ENCODE measurements at regions of chr19 and their contacts with region 1.

Region 1: DNA sequence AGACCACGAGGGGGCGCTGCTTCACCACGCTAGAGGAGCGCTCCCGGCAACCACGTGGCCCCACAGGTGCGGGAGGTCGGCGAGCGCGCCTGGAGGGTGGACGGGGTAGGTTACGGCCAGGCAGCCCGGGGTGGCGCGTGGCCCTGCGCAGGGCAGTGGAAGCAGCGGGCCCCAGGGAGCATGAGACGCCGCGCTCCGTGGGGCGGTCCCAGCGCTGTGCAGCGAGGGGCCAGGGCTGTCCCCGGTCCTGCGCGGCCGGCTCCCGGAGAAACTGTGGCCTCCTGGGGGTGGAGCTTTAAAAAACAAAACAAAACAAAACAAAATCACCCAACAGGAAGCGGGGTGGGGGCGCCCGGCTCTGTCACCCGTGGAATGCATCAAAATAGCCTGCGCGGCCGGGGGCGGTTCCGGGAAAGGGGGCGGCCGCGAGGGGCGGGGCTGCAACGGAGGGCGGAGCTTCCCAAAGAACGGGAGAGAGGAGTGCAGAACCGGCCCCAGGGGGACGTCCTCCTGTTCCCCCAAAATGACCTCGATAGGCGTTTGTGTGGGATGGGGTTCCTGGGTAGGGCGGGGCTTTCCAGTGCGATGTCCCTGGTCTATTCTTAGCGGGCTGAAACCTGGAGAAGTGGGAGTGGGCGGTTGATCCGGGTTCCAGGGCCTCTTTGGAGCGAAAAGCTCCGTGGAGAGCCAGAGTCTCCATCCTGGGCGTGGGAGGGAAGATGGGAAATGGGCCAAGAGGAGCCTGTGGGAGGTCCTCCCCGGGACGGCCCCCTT is 27.3 kb downstream of the NUMBL start:
- DNase-seq: peak; percentile 96
- H3K4me3 ChIP-seq: peak overlapping the region; percentile 61 to 75 (median 65)
- H3K27ac ChIP-seq: peak overlapping the region; percentile 88 to 90 (median 90)
- H3K4me1 ChIP-seq: peaks cover 0 to 16% (median 12%) of the 10 kb centered on the region in 4 donors
- H3K27me3 ChIP-seq: no peaks in the 10 kb centered on the region
- CTCF ChIP-seq: peak; percentile 97 to 98 (median 97)
- EP300 ChIP-seq: no peak
- POLR2A ChIP-seq: no peak

Region 2: DNA sequence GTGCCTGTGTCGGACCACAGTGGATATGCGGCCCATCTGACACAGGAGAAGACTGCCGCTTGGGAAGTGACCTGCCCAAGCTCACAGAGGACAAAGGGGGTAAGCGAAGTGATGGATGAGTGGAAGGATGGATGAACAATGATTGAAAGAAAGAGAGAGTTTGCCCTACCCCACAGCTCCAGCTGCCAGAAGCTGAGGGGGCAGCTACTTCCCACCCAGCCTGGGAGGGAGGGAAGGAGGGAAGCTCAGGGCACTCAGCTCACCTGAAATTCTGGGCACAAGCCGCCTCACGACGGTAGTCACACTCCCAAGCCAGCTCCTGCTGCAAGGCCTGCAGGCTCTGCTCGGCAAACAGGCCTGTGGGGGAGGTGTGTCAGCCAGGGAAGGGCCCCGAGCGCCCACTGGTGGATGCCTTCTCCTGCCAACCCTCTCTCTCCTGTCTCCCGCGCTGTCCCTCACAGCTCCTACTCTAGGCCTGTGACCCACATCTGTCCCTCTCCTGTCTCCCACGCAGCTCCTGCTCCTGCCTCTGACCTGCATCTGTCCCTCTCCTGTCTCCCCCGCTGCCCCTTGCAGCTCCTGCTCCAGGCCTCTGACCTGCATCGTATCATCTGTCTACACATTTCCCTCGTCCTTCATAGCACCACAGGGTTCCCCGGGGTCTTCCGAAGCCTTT is 39.4 kb after region 1 on chr19:
- intact Hi-C with region 1: loop called (anchors 2 kb)
- DNase-seq: peak; percentile 84
- H3K4me3 ChIP-seq: no peak overlapping the region
- H3K27ac ChIP-seq: peak overlapping the region; percentile 6 to 75 (median 71)
- H3K4me1 ChIP-seq: peaks cover 0 to 19% (median 10%) of the 10 kb centered on the region in 4 donors
- H3K27me3 ChIP-seq: no peaks in the 10 kb centered on the region
- CTCF ChIP-seq: peak; percentile 58 to 75 (median 70)
- EP300 ChIP-seq: no peak
- POLR2A ChIP-seq: no peak

Region 3: GRCh38 chr19:40811478-40812341 is 148.6 kb after region 1 on chr19:
- intact Hi-C with region 1: loop called (anchors 5 kb)
- DNase-seq: no peak
- H3K4me3 ChIP-seq: peak overlapping the region in 3 of 4 donors; percentile 45 to 51 (median 46)
- H3K27ac ChIP-seq: peak overlapping the region; percentile 80 to 99 (median 81)
- H3K4me1 ChIP-seq: peaks cover 0 to 63% (median 53%) of the 10 kb centered on the region in 4 donors
- H3K27me3 ChIP-seq: no peaks in the 10 kb centered on the region
- CTCF ChIP-seq: no peak
- EP300 ChIP-seq: no peak
- POLR2A ChIP-seq: no peak

Region 4: GRCh38 chr19:40822161-40822560 is 159.1 kb after region 1 on chr19:
- intact Hi-C with region 1: loop called (anchors 1 kb)
- DNase-seq: no peak
- H3K4me3 ChIP-seq: no peak overlapping the region
- H3K27ac ChIP-seq: peak overlapping the region in 3 of 4 donors; percentile 53 to 72 (median 72)
- H3K4me1 ChIP-seq: peaks cover 0 to 44% (median 28%) of the 10 kb centered on the region in 4 donors
- H3K27me3 ChIP-seq: no peaks in the 10 kb centered on the region
- CTCF ChIP-seq: no peak
- EP300 ChIP-seq: no peak
- POLR2A ChIP-seq: no peak

Region 5: DNA sequence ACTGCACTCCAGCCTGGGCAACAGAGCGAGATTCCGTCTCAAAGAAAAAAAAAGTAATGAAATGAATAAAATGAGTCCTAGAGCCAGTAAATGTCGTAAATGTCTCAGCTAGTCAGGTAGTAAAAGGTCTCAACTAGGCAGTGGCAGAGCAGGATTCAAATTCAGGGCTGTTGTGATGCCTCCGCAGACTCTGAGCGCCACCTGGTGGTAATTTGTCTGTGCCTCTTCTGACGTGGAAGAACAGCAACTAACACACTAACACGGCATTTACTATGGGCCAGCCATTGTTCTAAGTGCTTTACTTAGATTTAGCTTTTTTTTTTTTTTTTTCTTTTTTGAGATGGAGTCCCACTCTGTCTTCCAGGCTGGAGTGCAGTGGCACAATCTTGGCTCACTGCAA is 481.3 kb after region 1 on chr19:
- intact Hi-C with region 1: loop called (anchors 2 kb)
- DNase-seq: peak; percentile 88
- H3K4me3 ChIP-seq: no peak overlapping the region
- H3K27ac ChIP-seq: no peak overlapping the region
- H3K4me1 ChIP-seq: no peaks in the 10 kb centered on the region
- H3K27me3 ChIP-seq: no peaks in the 10 kb centered on the region
- CTCF ChIP-seq: peak; percentile 74 to 89 (median 83)
- EP300 ChIP-seq: no peak
- POLR2A ChIP-seq: no peak

Measured in sigmoid colon (tissue), 7 donors.